Thyroid gland (tissue), 4 donors: ENCODE measurements at regions of chr1 and their contacts with region 1.

Region 1: GRCh38 chr1:182677397-182678098 is 6.8 kb downstream of the RGS8 start:
- DNase-seq: no peak
- H3K4me3 ChIP-seq: no peak overlapping the region
- H3K27ac ChIP-seq: no peak overlapping the region
- H3K4me1 ChIP-seq: peaks cover 10 to 23% of the 10 kb centered on the region in 2 donors
- H3K27me3 ChIP-seq: no peaks in the 10 kb centered on the region
- CTCF ChIP-seq: no peak
- POLR2A ChIP-seq: no peak

Region 2: GRCh38 chr1:182789138-182790076 is 111.9 kb after region 1 on chr1 and contains the start of gene NPL:
- intact Hi-C with region 1: loop called (anchors 10 kb)
- DNase-seq: peak; percentile 78 to 79
- H3K4me3 ChIP-seq: peak within 1 kb of the TSS; percentile 49 to 87 (median 54)
- H3K27ac ChIP-seq: peak within 1 kb of the TSS in 2 of 3 donors; percentile 53 to 69
- H3K4me1 ChIP-seq: peaks cover 5 to 10% of the 10 kb centered on the region in 2 donors
- H3K27me3 ChIP-seq: no peaks in the 10 kb centered on the region
- CTCF ChIP-seq: peak in 1 of 6 experiments; percentile 22
- POLR2A ChIP-seq: peak in 1 of 2 donors; percentile 98
- total RNA-seq, gene NPL: 4.2 to 13.2 (median 8.0) TPM